ENCODE measurements at regions of chr16 and their contacts with region 1.

Region 1: DNA sequence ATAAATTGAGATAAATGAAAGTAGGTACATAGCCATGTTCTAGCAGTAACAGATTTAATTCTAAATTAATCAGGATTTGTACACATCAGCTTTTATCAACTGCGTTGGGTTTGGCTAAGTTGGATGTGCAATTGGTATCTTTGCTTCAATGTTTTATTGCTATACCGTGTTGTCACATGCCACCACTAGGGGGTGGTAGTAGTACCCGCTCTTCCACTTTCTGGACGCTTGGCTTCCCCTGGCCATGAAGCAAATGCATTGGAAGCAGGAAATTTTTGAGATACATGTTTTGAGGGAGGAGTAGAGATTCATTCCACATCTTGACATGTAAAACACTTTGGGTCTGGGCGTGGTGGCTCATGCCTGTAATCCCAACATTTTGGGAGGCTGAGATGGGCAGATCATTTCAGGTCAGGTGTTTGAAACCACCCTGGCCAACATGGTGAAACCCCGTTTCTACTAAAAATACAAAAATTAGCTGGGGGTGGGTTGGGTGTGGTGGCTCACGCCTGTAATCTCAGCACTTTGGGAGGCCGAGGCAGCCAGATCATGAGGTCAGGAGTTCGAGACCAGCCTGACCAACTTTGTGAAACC is 58.6 kb downstream of the EMP2 start:
- DNase-seq: peak; percentile 22 to 63
- ATAC-seq: peak; percentile 65 to 91 (median 82)
- H3K4me3 ChIP-seq: no peak overlapping the region
- H3K27ac ChIP-seq: no peak overlapping the region
- H3K4me1 ChIP-seq: no peaks in the 10 kb centered on the region
- H3K27me3 ChIP-seq: no peaks in the 10 kb centered on the region
- CTCF ChIP-seq: peak; percentile 92

Region 2: GRCh38 chr16:10003486-10003885 is 518.3 kb before region 1 on chr16:
- intact Hi-C with region 1: no loop called
- DNase-seq: no peak
- ATAC-seq: no peak
- H3K4me3 ChIP-seq: no peak overlapping the region
- H3K27ac ChIP-seq: no peak overlapping the region
- H3K4me1 ChIP-seq: no peaks in the 10 kb centered on the region
- H3K27me3 ChIP-seq: no peaks in the 10 kb centered on the region
- CTCF ChIP-seq: no peak

Region 3: DNA sequence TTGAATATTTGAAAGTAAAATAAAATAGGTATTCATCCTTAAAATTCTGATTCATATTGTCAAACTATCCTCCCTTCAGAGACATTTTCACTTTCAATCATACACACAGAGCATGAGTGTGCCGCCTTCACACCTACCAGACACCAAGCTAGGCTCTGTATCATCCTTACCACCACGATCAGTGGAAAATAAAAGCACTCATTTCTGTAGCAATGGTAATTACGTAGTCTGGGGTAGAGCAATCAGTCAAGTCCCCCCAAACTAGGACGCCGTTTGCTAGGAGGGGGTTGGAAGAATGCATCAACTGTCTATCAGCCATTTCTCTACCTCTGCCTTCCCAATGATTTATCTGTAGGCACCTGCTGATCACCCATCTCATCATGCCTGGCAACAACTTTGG is 255.0 kb before region 1 on chr16:
- intact Hi-C with region 1: no loop called
- DNase-seq: no peak
- ATAC-seq: no peak
- H3K4me3 ChIP-seq: no peak overlapping the region
- H3K27ac ChIP-seq: no peak overlapping the region
- H3K4me1 ChIP-seq: no peaks in the 10 kb centered on the region
- H3K27me3 ChIP-seq: no peaks in the 10 kb centered on the region
- CTCF ChIP-seq: no peak

Region 4: GRCh38 chr16:10668322-10669045 is 146.7 kb after region 1 on chr16:
- intact Hi-C with region 1: loop called in 1 of 2 experiments (anchors 10 kb)
- DNase-seq: no peak
- ATAC-seq: peak in 1 of 4 donors; percentile 53
- H3K4me3 ChIP-seq: no peak overlapping the region
- H3K27ac ChIP-seq: no peak overlapping the region
- H3K4me1 ChIP-seq: no peaks in the 10 kb centered on the region
- H3K27me3 ChIP-seq: no peaks in the 10 kb centered on the region
- CTCF ChIP-seq: peak; percentile 24

Region 5: GRCh38 chr16:10737068-10737625 is 215.4 kb after region 1 on chr16:
- intact Hi-C with region 1: loop called (anchors 2 kb)
- DNase-seq: no peak
- ATAC-seq: peak; percentile 53 to 78 (median 60)
- H3K4me3 ChIP-seq: peak overlapping the region; percentile 19
- H3K27ac ChIP-seq: peak overlapping the region; percentile 94
- H3K4me1 ChIP-seq: peaks cover 20% of the 10 kb centered on the region
- H3K27me3 ChIP-seq: no peaks in the 10 kb centered on the region
- CTCF ChIP-seq: peak; percentile 99